ENCODE measurements at regions of chr10 and their contacts with region 1.

Region 1: GRCh38 chr10:88064608-88065382 is 201.4 kb downstream of the PTEN start:
- H3K4me3 Mint-ChIP-seq: no peak overlapping the region
- H3K27ac Mint-ChIP-seq: peak overlapping the region; percentile 12
- H3K4me1 Mint-ChIP-seq: peaks cover 86% of the 10 kb centered on the region
- H3K27me3 Mint-ChIP-seq: no peaks in the 10 kb centered on the region

Region 2: DNA sequence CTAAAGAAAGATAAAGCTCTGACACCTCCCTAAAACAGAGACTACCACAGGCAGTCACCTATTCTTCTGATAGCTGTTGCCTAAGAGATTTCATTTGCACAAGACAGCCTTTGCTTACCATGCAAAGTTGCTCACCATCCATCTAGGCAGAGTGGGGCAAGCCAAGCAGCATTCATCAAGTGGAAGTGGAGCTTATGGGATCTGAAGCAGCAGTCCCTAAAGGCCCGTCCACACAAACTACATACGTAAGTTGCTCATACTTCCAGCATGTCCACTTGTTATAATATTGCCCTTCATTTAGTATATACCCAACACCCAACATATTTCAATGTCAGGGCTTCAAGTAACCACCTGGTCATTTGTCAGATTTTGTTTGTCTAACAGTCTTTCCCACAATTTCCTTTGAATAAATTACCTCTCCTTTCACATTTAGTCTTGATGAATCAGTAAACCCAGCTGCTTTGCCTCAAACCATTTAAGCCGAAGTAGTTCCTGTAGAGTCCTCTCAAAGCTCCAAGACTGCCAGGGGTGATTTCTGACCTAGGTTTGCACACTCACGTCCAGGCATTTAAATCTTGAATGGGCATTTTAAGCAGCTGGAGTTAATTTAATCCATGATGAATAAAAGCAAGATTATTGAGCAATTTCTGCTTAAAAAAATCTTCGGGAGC is 314.7 kb before region 1 on chr10:
- intact Hi-C with region 1: no loop called
- H3K4me3 Mint-ChIP-seq: no peak overlapping the region
- H3K27ac Mint-ChIP-seq: no peak overlapping the region
- H3K4me1 Mint-ChIP-seq: no peaks in the 10 kb centered on the region
- H3K27me3 Mint-ChIP-seq: no peaks in the 10 kb centered on the region

Region 3: DNA sequence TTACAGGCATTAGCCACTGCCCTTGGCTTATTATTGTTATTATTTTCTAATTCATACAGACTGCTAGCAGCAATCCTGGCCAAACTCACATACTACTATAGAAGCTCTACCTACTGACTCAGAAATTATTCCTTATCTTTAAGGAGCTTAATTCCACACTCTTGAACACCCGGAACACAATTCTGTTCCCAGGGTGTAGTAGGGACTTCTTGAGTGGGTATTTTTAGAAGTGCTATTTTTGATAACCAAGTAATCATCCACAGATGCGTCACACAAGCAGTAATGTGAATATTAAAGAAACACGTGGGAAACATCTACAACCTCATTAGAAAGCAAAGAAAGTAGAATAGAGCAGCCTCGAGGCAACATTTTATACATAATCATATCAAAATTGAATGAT is 52.2 kb before region 1 on chr10:
- intact Hi-C with region 1: no loop called
- H3K4me3 Mint-ChIP-seq: no peak overlapping the region
- H3K27ac Mint-ChIP-seq: no peak overlapping the region
- H3K4me1 Mint-ChIP-seq: peaks cover 6% of the 10 kb centered on the region
- H3K27me3 Mint-ChIP-seq: no peaks in the 10 kb centered on the region

Region 4: DNA sequence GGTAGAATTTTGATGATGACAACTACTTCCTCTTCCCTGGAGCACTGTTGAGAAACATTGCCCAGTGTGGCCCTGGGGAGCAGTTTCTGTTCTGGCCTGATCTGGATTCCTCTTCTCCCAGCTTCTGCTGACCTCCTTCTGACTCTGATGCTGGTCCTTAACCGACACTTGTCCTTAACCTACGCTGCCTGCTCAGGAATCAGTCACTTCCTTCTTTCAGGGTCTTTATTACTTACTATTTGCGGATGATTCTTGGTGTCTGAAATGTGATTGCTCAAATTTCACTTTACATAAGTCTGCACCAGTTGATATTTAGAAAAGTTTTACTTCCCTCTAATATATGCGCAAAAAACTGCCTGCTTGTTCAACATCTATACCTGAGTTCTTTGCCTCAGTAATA is 37.2 kb before region 1 on chr10:
- intact Hi-C with region 1: loop called (anchors 5 kb)
- H3K4me3 Mint-ChIP-seq: no peak overlapping the region
- H3K27ac Mint-ChIP-seq: peak overlapping the region; percentile 31
- H3K4me1 Mint-ChIP-seq: peaks cover 32% of the 10 kb centered on the region
- H3K27me3 Mint-ChIP-seq: no peaks in the 10 kb centered on the region

Region 5: DNA sequence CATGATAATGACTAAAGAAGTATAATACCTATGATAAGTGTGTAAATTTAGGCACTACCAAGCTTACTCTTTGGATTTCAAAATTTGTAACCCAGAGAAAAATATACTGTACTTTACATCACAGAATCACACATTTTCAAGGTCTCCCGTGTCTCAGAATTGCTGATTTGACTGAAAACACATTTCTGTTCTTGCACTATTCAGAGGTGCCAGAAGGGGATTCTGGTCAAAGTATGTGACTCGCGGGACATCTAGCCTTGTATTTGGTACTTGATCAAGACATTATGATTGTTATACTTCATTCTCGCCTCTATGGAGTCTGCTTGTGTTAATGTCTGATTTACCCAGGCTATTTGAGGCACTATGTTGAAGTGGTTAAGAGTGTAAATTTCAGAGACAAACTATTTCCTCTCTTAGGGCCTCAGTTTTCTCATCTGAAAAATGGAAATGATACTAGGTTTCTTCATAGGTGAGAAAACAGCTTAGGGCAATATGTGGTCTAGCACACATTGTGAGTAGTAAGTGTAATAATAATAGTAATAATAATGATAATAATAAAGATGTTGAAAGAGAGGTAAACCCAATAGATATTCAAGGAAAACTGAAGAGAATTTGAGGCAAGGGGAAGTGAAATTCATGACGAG is 197.9 kb after region 1 on chr10:
- intact Hi-C with region 1: no loop called
- H3K4me3 Mint-ChIP-seq: no peak overlapping the region
- H3K27ac Mint-ChIP-seq: no peak overlapping the region
- H3K4me1 Mint-ChIP-seq: peaks cover 21% of the 10 kb centered on the region
- H3K27me3 Mint-ChIP-seq: no peaks in the 10 kb centered on the region

Measured in dendritic cell treated with granulocyte-macrophage colony-stimulating factor and Interleukin-4, amounts not matched to agents 40 ng/mL and 50 ng/mL, for 4 days (primary cell).